H1 (cell line): ENCODE measurements at regions of chr16 and their contacts with region 1.

Region 1: GRCh38 chr16:2500918-2501750 is 12.6 kb upstream of the ATP6V0C start:
- DNase-seq: peak; percentile 77 to 98
- H3K4me3 ChIP-seq: peak overlapping the region in 3 of 4 experiments; percentile 14 to 60 (median 24); a peak in 5 of 8 replicates
- H3K27ac ChIP-seq: no peak overlapping the region; the same call in 1 of the 2 replicates
- H3K4me1 ChIP-seq: peaks cover 0 to 16% (median 9%) of the 10 kb centered on the region in 4 experiments; a peak in 6 of 7 replicates
- H3K27me3 ChIP-seq: no peaks in the 10 kb centered on the region; a peak in 1 of 7 replicates
- CTCF ChIP-seq: peak; percentile 91 to 100 (median 96)
- EP300 ChIP-seq: peak in 1 of 2 experiments; percentile 39; a peak in 1 of 3 replicates
- POLR2A ChIP-seq: no peak
- RAD21 ChIP-seq: peak; percentile 94 to 96

Region 2: DNA sequence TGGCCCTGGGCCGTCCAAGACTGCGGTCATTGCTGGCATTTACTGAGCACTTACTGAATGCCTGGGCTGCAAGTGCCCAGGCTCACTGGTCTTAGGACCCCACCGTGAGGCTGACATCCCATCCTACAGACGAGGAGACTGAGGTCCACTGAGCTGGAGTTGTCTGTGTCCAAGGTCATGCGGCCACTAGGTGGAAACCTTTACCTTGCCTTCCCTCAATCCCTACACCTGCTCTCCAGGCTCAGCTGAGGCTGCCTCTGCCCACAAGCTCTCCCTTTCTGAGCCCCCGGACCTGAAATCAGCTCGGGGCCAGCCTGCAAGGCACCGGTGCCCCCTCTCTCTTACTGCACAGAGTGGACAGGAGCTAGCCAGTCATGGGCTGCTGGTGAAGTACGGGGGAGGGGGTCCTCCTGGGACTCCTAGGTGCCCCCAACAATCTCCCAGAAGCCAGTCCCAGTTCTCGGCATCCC is 306.2 kb before region 1 on chr16:
- CTCF ChIA-PET with region 1: interaction called, 11 read pairs
- POLR2A ChIA-PET with region 1: interaction called, 3 read pairs
- DNase-seq: peak in 1 of 2 experiments; percentile 80
- H3K4me3 ChIP-seq: peak overlapping the region; percentile 39 to 74 (median 48); a peak in 7 of 8 replicates
- H3K27ac ChIP-seq: no peak overlapping the region; the same call in 1 of the 2 replicates
- H3K4me1 ChIP-seq: peaks cover 0 to 10% (median 3%) of the 10 kb centered on the region in 4 experiments; a peak in 4 of 7 replicates
- H3K27me3 ChIP-seq: peaks cover 4 to 32% (median 24%) of the 10 kb centered on the region in 4 experiments
- CTCF ChIP-seq: peak; percentile 72 to 98 (median 85)
- EP300 ChIP-seq: no peak
- POLR2A ChIP-seq: no peak
- RAD21 ChIP-seq: peak; percentile 88

Region 3: GRCh38 chr16:2459647-2460390 is 41.3 kb before region 1 on chr16 and contains the start of gene TEDC2:
- CTCF ChIA-PET with region 1: interaction called, 21 read pairs
- POLR2A ChIA-PET with region 1: interaction called, 5 read pairs
- DNase-seq: peak; percentile 93 to 98
- H3K4me3 ChIP-seq: peak within 1 kb of the TSS; percentile 55 to 78 (median 68)
- H3K27ac ChIP-seq: no peak within 1 kb of the TSS; the same call in 1 of the 2 replicates
- H3K4me1 ChIP-seq: peaks cover 0 to 18% (median 15%) of the 10 kb centered on the region in 4 experiments; a peak in 6 of 7 replicates
- H3K27me3 ChIP-seq: no peaks in the 10 kb centered on the region
- CTCF ChIP-seq: no peak
- EP300 ChIP-seq: no peak
- POLR2A ChIP-seq: peak in 1 of 2 experiments; percentile 52; a peak in 1 of 3 replicates
- RAD21 ChIP-seq: no peak
- total RNA-seq, gene TEDC2: 54.2 and 54.6 TPM in 2 replicates

Region 4: GRCh38 chr16:2474877-2475412 is 26.2 kb before region 1 on chr16 and contains the start of gene TBC1D24:
- CTCF ChIA-PET with region 1: interaction called, 15 read pairs
- POLR2A ChIA-PET with region 1: interaction called, 7 read pairs
- DNase-seq: peak in 1 of 2 experiments; percentile 90
- H3K4me3 ChIP-seq: peak within 1 kb of the TSS; percentile 61 to 93 (median 72)
- H3K27ac ChIP-seq: no peak within 1 kb of the TSS
- H3K4me1 ChIP-seq: peaks cover 0 to 30% (median 14%) of the 10 kb centered on the region in 4 experiments; a peak in 6 of 7 replicates
- H3K27me3 ChIP-seq: peaks cover 20 to 55% (median 43%) of the 10 kb centered on the region in 4 experiments
- CTCF ChIP-seq: no peak
- EP300 ChIP-seq: no peak
- POLR2A ChIP-seq: no peak
- RAD21 ChIP-seq: no peak
- total RNA-seq, gene TBC1D24: 18.6 and 21.5 TPM in 2 replicates

Region 5: DNA sequence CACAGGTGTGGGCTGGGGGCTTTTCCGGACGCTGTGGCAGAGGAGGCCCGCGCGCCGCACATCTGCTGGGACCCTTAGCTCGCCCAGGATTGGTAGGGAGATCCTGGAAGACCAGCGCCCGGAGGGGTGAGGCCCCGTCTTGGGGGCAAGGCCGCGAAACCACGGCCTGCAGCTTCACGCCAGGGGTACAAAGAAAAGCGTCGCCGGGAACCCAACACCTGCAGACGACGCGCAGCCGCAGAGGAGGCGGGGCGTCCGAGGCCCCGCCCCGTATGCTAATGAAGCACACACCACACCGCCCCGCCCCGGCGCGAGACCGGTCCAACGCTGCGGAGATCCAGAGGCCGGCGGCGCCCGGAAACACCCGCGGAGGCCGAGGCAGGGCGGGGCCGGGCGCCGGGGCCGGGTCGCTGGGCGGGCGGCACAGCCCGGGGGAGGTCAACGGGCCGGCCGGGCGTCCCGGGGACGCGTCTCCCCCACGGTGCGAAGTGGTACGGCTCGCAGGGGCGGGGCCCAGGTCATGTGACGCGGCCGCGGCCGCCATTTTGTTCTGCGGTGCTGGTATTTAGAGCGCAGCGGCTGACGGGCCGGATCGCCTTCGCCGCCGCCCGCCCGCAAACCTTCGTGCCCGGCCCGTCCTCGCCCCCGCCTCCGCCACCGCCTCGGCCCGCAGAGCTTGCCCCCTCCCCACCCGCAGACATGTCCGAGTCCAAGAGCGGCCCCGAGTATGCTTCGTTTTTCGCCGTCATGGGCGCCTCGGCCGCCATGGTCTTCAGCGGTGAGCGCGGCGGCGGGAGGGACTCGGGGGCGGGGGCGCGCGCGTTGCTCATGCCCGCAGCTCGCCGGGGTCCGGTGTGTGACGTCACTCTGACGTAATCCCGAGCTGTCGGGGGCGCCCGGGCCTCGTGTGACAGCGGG is 12.5 kb after region 1 on chr16 and contains the start of gene ATP6V0C:
- CTCF ChIA-PET with region 1: interaction called, 24 read pairs
- POLR2A ChIA-PET with region 1: interaction called, 10 read pairs
- DNase-seq: peak; percentile 80 to 96
- H3K4me3 ChIP-seq: peak within 1 kb of the TSS; percentile 77 to 99 (median 84)
- H3K27ac ChIP-seq: peak within 1 kb of the TSS; percentile 99
- H3K4me1 ChIP-seq: peaks cover 4 to 37% (median 22%) of the 10 kb centered on the region in 4 experiments
- H3K27me3 ChIP-seq: peaks cover 0 to 3% (median 0%) of the 10 kb centered on the region in 4 experiments; a peak in 2 of 7 replicates
- CTCF ChIP-seq: no peak
- EP300 ChIP-seq: peak in 1 of 2 experiments; percentile 90; a peak in 2 of 3 replicates
- POLR2A ChIP-seq: peak in 1 of 2 experiments; percentile 95; a peak in 2 of 3 replicates
- RAD21 ChIP-seq: no peak
- total RNA-seq, gene ATP6V0C: 176 and 199 TPM in 2 replicates